ENCODE measurements at regions of chr2 and their contacts with region 1.

Region 1: DNA sequence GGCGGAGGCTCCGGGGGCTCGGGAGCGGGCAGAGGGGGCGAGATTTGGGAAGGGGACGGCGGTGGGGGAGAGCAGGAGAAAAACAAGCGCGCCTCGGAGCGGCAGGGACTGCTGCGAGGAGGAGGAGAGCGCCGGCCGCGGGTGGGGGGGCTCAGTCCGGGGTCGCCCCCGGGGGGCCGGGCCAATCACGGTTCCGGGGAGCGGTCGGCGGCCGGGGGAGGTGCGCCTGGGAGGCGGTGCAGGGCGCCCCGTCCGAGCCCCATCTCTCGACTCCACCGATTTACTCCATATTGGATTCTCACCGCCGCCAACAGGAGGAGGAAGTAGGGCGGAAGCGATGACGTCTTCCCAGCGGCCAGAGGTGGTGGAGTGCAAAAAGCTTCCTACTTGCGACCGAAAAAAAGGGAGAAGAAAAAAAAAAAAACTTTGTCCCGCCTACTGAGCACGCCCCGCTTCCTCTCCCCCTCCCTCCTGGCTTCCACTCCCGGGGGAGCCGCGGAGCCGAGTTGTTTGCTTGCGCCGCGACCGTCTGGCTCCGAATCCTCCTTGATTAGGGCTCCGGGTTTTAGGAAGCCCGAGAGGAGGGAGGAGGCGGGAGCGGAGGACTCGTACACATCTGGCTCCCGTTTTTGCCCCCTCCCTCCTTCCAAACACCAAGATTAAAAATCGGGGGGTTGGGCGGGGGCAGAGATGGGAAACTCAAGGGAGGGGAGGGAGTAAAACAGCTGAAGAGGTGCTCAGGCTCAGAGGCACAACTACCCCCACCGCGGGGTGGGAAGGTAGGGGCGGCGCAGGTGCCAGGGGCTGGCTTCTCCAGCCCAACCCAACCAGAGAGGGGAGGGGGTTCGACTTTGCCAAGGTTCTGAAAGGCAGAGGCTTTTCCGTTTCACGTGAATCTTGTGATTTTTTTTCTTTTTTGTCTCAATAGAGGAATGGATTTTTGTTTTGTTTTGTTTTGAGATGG is at the start of gene SPRED2:
- DNase-seq: peak; percentile 88
- total RNA-seq, gene SPRED2: 4.1 and 7.5 TPM in 2 replicates

Region 2: DNA sequence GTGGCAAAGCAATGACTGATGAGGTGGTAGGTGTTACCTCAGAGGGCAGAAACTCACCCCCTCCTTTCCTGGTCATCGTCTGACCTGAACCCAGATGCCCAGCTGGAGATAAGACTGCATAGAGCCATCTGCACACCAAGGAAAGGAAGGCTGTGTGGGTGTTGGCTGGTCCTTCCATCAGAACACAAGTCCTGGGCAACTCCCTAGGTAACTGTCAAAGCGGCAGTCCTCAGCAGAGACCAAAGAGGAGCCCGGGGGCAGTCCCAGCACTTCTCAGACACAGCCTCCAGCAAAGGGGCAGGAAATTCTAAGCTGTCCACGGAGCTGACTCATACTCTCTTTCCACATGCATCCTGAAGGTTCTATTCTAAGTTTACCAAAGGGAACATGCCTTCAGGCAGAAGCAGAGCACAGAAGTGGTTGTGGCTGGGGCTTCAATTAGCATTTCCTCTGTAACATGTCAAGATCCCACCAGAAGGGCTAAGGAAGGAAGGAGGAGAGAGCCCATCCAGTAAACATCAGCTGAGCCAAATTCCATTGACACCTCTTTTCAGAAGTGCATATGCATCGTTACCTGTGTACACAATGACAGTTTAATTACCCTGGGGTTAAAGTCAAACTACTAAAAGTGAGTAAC is 54.8 kb before region 1 on chr2:
- in situ Hi-C with region 1: no loop called
- DNase-seq: no peak

Region 3: DNA sequence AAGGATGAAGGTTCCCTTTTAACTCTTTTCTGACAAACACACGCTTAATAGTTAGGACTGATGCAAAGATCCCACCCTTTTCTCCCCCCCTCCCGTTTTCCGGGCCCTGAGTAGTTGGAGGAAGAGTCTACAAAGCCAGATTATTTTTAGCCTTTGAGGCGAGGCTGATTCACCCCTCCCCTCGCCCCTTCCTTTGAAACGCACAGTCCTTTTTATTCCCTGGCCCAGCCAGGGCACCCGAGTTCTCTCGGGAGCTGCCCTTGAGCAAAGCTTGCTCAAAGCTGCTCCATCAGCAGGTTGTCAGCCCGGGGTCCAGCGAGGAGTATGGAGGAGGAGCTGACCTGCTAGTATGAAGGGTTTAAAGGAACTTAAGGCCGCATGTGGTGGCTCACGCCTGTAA is 47.0 kb after region 1 on chr2:
- in situ Hi-C with region 1: no loop called
- DNase-seq: no peak

Region 4: DNA sequence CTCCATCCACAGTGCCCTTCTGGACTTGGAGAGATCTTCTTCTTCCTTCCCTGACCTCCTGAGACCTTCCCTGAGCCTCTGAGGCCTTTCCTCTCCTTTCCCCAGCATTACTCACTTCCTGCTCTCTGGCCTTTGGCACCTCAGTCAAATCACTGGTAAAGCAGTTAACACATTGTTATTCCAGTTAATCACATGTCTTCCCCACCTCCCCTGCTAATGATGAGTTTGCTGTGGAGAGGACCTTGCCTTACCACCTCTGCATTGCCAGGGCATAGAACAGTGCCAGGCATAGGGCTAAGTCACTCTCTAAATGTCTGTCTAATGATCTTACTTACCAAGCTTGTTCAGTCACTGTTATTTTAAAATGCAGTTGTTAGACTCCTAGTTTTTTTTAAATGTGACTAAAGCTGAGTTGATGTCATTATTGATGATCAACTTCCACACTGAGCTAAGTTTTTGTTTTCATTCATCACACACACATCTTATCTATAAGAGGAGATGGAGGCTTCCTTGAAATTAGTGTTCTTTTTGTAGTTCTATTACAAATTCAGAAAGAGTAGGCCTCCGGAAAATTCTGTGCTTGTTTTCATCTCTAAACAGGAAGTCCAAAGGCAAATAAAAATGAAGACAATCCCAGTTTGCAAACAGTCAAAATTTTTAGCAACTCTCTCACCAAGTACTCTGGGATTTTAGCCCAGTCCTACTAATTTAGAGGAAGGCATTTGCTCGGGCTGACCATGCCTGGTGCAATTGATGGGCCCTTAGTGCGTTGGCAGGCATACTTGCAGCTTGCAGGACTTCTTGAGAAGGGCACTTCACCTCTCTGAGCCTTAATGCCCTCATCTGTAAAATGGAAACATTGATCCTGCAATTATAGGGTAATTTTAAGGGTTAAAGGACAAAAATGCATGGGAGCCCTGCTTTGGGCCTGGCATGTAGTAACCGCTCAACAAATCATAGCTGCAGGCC is 113.6 kb after region 1 on chr2:
- in situ Hi-C with region 1: loop called (anchors 25 kb)
- DNase-seq: no peak

Measured in G401 (cell line).